Activated naive CD4-positive, alpha-beta T cell treated with anti-CD3 and anti-CD28 coated beads for 36 hours (primary cell): ENCODE measurements at regions of chr11 and their contacts with region 1.

Region 1: GRCh38 chr11:17207317-17208258 is at the start of gene PIK3C2A:
- DNase-seq: peak; percentile 97
- H3K4me3 Mint-ChIP-seq: peak within 1 kb of the TSS; percentile 99
- H3K27ac Mint-ChIP-seq: peak within 1 kb of the TSS; percentile 92
- H3K4me1 Mint-ChIP-seq: peaks cover 30% of the 10 kb centered on the region
- H3K27me3 Mint-ChIP-seq: no peaks in the 10 kb centered on the region
- total RNA-seq, gene PIK3C2A: 16.4 to 17.3 TPM

Region 2: DNA sequence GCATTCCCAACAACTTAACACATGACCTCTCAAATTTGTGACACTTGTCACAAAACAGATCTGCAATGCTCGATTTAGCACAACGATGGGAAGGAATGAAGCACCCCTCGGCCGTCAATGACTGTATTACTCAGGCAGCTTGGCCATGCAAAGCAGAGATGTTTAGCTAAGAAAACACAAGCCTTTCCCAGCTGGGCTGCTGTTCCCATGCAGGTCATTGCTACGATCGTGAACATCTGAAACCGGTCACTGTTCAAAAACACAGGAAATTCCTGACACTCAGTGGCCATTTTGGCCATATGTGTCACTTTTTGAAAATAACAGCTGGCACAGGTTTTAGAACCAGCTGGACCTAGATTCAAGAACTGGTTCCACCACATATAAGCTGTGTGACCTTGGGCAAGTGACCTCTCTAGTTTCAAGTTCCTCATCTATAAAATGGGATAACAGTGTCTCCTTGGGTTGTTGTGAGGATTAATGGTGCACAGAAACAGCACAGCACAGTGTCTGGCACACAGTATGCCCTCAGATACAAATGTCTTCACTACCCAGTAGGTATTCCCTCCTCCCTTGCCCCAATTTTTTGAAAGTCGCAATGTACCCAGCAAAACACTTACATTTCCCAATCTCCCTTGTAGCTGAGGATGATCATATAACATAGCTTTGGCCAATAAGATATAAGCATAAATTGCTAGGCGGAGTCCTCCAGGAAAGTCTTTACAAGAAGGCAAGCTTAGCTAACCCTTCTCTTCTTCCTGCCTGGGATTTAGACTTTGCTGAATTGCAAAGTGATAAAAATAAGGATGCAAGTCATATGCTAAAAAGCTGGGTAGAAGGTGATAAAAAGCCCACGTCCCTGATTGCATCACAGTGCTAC is 376.0 kb before region 1 on chr11:
- CTCF ChIA-PET with region 1: no interaction called
- intact Hi-C with region 1: no loop called
- DNase-seq: no peak
- H3K4me3 Mint-ChIP-seq: no peak overlapping the region
- H3K27ac Mint-ChIP-seq: no peak overlapping the region
- H3K4me1 Mint-ChIP-seq: peaks cover 14% of the 10 kb centered on the region
- H3K27me3 Mint-ChIP-seq: no peaks in the 10 kb centered on the region

Region 3: DNA sequence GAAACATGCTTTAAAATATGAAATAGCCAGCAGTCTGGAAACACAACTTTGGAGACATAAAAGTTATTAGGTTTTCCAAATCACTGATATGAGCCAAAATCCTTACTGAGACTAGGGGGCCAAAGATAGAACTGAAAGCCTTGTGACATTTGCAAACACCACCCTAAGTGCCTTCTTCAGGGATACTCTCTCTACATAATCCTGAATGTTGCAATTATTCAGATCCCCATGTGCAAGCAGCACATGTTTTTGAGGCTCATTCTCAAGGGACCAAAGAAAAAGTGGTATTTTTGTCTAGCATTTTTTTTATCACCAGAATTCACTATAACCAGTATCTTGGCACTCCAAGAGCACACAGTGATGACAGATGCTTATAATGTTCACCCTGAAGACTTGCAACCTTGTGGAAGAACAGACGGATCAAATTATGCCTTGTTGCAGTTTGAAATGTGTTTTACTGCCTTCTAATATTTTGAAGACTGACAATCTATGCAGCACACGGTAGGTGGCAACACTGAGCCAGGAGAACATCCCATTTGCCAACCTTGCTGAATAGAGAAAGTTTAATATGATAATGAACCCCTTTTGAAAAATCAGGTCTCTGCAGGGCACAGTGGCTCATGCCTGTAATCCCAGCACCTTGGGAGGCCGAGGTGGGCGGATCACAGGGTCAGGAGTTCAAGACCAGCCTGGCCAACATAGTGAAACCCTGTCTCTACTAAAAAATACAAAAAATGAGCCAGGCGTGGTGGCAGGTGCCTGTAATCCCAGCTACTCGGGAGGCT is 271.9 kb before region 1 on chr11:
- CTCF ChIA-PET with region 1: no interaction called
- intact Hi-C with region 1: loop called (anchors 5 kb)
- DNase-seq: peak; percentile 53
- H3K4me3 Mint-ChIP-seq: no peak overlapping the region
- H3K27ac Mint-ChIP-seq: no peak overlapping the region
- H3K4me1 Mint-ChIP-seq: no peaks in the 10 kb centered on the region
- H3K27me3 Mint-ChIP-seq: peaks cover 5% of the 10 kb centered on the region

Region 4: DNA sequence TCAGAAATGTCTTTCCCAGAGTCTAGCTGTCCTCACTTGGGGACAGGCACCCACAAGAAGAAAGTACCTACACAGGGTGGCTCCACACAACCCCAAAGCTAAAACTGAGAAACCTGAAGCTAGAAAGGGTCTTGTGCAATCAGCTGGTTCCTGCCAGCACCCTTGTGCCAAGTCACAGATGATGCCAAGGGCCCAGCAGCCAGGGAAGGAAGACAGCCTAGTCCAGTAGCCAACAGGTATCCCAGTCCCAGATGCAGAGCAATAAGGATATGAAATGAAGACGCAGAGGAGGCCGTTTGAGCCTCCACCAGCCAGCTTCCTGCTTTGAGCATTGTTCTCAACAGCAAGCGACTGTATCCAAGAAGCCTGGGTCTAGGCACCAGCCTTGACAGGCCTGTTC is 199.5 kb before region 1 on chr11:
- CTCF ChIA-PET with region 1: no interaction called
- intact Hi-C with region 1: no loop called
- DNase-seq: no peak
- H3K4me3 Mint-ChIP-seq: no peak overlapping the region
- H3K27ac Mint-ChIP-seq: no peak overlapping the region
- H3K4me1 Mint-ChIP-seq: no peaks in the 10 kb centered on the region
- H3K27me3 Mint-ChIP-seq: no peaks in the 10 kb centered on the region

Region 5: DNA sequence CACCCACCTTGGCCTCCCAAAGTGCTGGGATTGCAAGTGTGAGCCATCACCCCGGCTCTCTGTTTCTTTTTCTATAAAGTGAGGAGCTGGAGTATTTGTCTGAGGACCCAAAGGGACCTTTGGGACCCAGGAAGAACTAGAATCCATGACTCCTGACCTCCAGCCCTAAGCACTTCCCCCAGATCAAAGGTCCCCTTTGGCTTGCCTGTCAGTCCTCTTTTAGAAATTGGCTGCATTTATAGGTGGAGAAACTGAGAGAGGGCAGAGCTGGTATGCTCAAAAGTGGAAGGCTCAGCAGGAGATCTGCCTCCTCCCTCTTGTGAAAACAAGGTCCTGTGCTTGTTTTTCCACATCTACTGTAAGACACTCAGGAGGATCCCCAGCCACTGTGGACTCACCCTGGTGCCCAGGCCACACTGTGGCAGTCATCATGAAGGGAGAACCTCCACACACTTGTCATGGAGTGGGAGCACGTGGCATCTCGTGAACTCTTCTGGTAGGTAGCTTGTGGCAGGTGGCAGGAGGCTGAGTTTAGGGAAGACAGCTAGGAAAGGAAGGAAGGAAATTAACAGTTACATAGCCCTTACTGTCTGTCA is 181.0 kb before region 1 on chr11:
- CTCF ChIA-PET with region 1: no interaction called
- intact Hi-C with region 1: no loop called
- DNase-seq: no peak
- H3K4me3 Mint-ChIP-seq: no peak overlapping the region
- H3K27ac Mint-ChIP-seq: no peak overlapping the region
- H3K4me1 Mint-ChIP-seq: no peaks in the 10 kb centered on the region
- H3K27me3 Mint-ChIP-seq: no peaks in the 10 kb centered on the region

Region 6: DNA sequence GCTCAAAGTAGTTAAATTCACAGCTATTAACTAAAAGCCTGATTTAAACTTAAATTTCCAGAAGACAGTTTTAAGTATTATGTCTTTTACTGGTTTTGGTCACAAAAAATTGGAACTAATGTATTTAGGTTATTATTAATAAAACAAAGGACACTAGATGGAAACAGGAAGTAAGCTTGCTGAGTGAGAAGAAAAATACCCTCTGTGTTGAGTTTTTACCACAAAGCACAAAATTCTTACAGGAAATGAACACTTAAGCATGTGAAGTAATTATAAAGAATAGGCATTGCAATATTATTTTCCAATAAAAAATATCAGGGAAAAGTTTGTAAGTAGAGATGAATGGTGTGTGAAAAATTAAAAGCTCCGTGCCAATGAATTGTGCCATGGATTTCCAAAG is 46.1 kb before region 1 on chr11:
- CTCF ChIA-PET with region 1: no interaction called
- intact Hi-C with region 1: loop called (anchors 2 kb)
- DNase-seq: no peak
- H3K4me3 Mint-ChIP-seq: no peak overlapping the region
- H3K27ac Mint-ChIP-seq: no peak overlapping the region
- H3K4me1 Mint-ChIP-seq: peaks cover 44% of the 10 kb centered on the region
- H3K27me3 Mint-ChIP-seq: no peaks in the 10 kb centered on the region

Region 7: GRCh38 chr11:17343907-17344306 is 136.3 kb after region 1 on chr11:
- CTCF ChIA-PET with region 1: no interaction called
- intact Hi-C with region 1: loop called (anchors 2 kb)
- DNase-seq: peak; percentile 90
- H3K4me3 Mint-ChIP-seq: no peak overlapping the region
- H3K27ac Mint-ChIP-seq: peak overlapping the region; percentile 51
- H3K4me1 Mint-ChIP-seq: peaks cover 19% of the 10 kb centered on the region
- H3K27me3 Mint-ChIP-seq: no peaks in the 10 kb centered on the region